GM12878 (cell line): ENCODE measurements at regions of chr12 and their contacts with region 1.

Region 1: DNA sequence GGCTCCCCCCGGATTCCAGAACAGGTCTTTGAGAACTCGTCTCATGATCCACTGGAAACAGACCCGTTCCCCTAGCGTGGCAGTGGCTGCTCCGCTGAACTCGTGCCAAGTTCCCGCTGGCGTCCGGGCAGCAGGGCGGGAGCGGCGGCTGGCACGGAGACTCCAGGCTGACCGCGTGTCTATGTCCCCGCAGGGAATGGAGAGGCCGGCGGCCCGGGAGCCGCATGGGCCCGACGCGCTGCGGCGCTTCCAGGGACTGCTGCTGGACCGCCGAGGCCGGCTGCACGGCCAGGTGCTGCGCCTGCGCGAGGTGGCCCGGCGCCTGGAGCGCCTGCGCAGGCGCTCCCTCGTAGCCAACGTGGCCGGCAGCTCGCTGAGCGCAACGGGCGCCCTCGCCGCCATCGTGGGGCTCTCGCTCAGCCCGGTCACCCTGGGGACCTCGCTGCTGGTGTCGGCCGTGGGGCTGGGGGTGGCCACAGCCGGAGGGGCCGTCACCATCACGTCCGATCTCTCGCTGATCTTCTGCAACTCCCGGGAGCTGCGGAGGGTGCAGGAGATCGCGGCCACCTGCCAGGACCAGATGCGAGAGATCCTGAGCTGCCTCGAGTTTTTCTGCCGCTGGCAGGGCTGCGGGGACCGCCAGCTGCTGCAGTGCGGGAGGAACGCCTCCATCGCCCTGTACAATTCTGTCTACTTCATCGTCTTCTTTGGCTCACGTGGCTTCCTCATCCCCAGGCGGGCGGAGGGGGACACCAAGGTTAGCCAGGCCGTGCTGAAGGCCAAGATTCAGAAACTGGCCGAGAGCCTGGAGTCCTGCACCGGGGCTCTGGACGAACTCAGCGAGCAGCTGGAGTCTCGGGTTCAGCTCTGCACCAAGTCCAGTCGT is 1.5 kb downstream of the APOLD1 start:
- DNase-seq: no peak
- ATAC-seq: peak; percentile 96
- H3K4me3 ChIP-seq: peak overlapping the region; percentile 65
- H3K27ac ChIP-seq: peak overlapping the region; percentile 27; the same call in 1 of the 2 replicates
- H3K4me1 ChIP-seq: peaks cover 18% of the 10 kb centered on the region
- H3K27me3 ChIP-seq: no peaks in the 10 kb centered on the region
- CTCF ChIP-seq: no peak
- EP300 ChIP-seq: no peak
- POLR2A ChIP-seq: peak; percentile 96
- RAD21 ChIP-seq: no peak

Region 2: GRCh38 chr12:12803186-12803585 is 16.2 kb after region 1 on chr12:
- CTCF ChIA-PET with region 1: interaction called, 67 read pairs
- POLR2A ChIA-PET with region 1: interaction called, 6 read pairs
- RAD21 ChIA-PET with region 1: interaction called, 12 read pairs
- SMC1A ChIA-PET with region 1: interaction called, 50 read pairs
- in situ Hi-C with region 1: no loop called
- intact Hi-C with region 1: loop called (anchors 1 kb)
- DNase-seq: no peak
- ATAC-seq: peak; percentile 90
- H3K4me3 ChIP-seq: no peak overlapping the region
- H3K27ac ChIP-seq: no peak overlapping the region; the same call in 1 of the 2 replicates
- H3K4me1 ChIP-seq: peaks cover 33% of the 10 kb centered on the region
- H3K27me3 ChIP-seq: no peaks in the 10 kb centered on the region
- CTCF ChIP-seq: no peak
- EP300 ChIP-seq: peak in 1 of 2 experiments; percentile 61; a peak in 2 of 4 replicates
- POLR2A ChIP-seq: 0 out of 2 replicates have a peak, but pooled peaks have one; percentile 29
- RAD21 ChIP-seq: no peak

Region 3: GRCh38 chr12:12821975-12822374 is 35.0 kb after region 1 on chr12:
- CTCF ChIA-PET with region 1: interaction called, 136 read pairs
- POLR2A ChIA-PET with region 1: interaction called, 4 read pairs
- RAD21 ChIA-PET with region 1: interaction called, 5 read pairs
- SMC1A ChIA-PET with region 1: interaction called, 88 read pairs
- in situ Hi-C with region 1: no loop called
- intact Hi-C with region 1: no loop called
- DNase-seq: no peak
- ATAC-seq: peak; percentile 45
- H3K4me3 ChIP-seq: no peak overlapping the region
- H3K27ac ChIP-seq: peak overlapping the region; percentile 70
- H3K4me1 ChIP-seq: peaks cover 22% of the 10 kb centered on the region
- H3K27me3 ChIP-seq: no peaks in the 10 kb centered on the region
- CTCF ChIP-seq: no peak
- EP300 ChIP-seq: no peak
- POLR2A ChIP-seq: no peak
- RAD21 ChIP-seq: no peak

Region 4: GRCh38 chr12:12916135-12916944 is 129.4 kb after region 1 on chr12:
- CTCF ChIA-PET with region 1: interaction called, 49 read pairs
- POLR2A ChIA-PET with region 1: no interaction called
- RAD21 ChIA-PET with region 1: interaction called, 7 read pairs
- SMC1A ChIA-PET with region 1: interaction called, 34 read pairs
- in situ Hi-C with region 1: no loop called
- intact Hi-C with region 1: loop called (anchors 2 kb)
- DNase-seq: no peak
- ATAC-seq: peak; percentile 99
- H3K4me3 ChIP-seq: no peak overlapping the region
- H3K27ac ChIP-seq: no peak overlapping the region
- H3K4me1 ChIP-seq: no peaks in the 10 kb centered on the region
- H3K27me3 ChIP-seq: peaks cover 2 to 3% of the 10 kb centered on the region in 2 experiments; a peak in 2 of 4 replicates
- CTCF ChIP-seq: peak; percentile 96 to 99 (median 99); a peak in 5 of 6 replicates
- EP300 ChIP-seq: no peak
- POLR2A ChIP-seq: no peak
- RAD21 ChIP-seq: peak; percentile 98

Region 5: DNA sequence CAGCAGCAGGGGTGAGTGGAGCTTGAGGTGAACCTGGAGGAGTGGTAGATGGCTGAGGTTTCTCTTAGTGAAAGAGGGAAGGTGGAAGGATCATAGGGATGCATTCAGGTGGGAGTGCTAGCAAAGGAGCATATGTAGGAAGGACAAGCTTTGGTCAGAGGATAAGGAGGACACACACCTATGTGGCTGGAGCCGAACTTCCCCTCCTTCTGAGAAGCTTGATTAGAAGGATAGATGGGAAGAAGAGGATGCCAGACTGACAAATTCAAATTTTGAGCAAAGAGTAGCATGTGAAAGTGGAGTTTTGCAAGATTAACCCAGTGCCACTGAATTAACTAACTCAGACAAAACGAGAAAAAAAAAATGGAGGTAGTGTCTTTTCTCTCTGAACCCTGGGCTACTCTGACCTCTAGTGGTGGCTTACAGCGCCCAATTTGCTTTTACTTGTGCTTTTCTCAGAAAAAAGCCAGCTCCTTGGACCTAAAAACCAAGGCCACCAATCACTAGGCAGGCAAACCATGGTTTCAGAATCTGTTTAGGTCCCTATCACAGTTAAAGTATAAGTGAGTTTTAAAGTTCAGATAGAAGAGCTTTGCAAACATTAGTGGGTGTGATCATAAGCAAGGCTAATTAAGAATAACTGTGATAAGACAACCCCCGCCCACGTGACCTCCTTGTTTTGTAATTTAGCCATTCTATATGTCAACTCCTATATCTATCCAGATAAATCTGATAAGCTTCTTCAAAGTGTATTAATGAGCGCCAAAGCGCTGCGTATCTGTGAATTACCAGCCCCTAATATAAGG is 425.1 kb after region 1 on chr12:
- CTCF ChIA-PET with region 1: interaction called, 38 read pairs
- POLR2A ChIA-PET with region 1: no interaction called
- RAD21 ChIA-PET with region 1: interaction called, 20 read pairs
- SMC1A ChIA-PET with region 1: interaction called, 21 read pairs
- in situ Hi-C with region 1: loop called (anchors 5 kb)
- intact Hi-C with region 1: loop called (anchors 1 kb)
- DNase-seq: no peak
- ATAC-seq: peak; percentile 72
- H3K4me3 ChIP-seq: no peak overlapping the region
- H3K27ac ChIP-seq: no peak overlapping the region
- H3K4me1 ChIP-seq: no peaks in the 10 kb centered on the region
- H3K27me3 ChIP-seq: peaks cover 0 to 9% of the 10 kb centered on the region in 2 experiments; a peak in 2 of 4 replicates
- CTCF ChIP-seq: peak; percentile 71 to 93 (median 87)
- EP300 ChIP-seq: no peak
- POLR2A ChIP-seq: no peak
- RAD21 ChIP-seq: peak; percentile 91